Heart right ventricle (tissue), 16 donors: ENCODE measurements at regions of chr10 and their contacts with region 1.

Region 1: DNA sequence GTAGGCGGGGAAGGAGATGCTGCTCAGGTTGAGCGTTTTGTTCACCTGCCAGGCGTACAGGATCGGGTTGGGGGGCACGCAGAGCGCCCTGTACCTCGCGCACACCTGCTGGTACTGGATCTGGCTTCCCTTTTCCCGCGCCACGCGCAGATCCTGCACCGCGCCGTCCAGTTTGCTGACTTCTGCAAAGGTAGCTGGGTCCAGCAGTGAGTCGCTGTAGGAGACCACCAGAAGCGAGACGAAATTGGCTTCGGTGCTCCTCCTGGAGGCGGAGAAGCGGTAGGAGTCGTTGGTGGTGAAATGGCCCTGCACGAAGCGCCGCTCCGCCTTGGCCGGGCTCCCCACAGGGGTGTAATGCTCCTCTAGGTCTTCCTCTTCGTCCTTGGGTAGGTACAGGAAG is 90.7 kb upstream of the RAB18 start:
- DNase-seq: no peak
- ATAC-seq: peak in 1 of 8 donors; percentile 31
- H3K4me3 ChIP-seq: no peak overlapping the region
- H3K27ac ChIP-seq: no peak overlapping the region
- H3K4me1 ChIP-seq: no peaks in the 10 kb centered on the region
- H3K27me3 ChIP-seq: peaks cover 0 to 46% (median 24%) of the 10 kb centered on the region in 7 donors
- CTCF ChIP-seq: no peak

Region 2: DNA sequence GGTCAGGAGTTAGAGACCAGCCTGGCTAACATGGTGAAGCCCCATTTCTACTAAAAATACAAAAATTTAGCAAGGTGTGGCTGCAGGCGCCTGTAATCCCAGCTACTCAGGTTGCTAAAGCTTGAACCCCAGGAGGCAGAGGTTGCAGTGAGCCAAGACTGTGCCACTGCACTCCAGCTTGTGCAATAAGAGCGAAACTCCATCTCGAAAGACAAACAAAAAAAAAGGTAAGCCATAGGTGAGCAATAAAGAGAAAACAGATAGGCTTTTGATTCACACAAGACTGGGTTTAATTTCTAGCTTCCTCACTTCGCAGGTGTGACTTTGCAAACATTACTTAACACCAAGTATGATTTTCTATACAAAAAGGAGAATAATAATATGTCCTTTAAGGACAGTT is 100.5 kb before region 1 on chr10:
- intact Hi-C with region 1: loop called in 1 of 10 experiments (anchors 5 kb)
- DNase-seq: no peak
- ATAC-seq: no peak
- H3K4me3 ChIP-seq: no peak overlapping the region
- H3K27ac ChIP-seq: no peak overlapping the region
- H3K4me1 ChIP-seq: no peaks in the 10 kb centered on the region
- H3K27me3 ChIP-seq: peaks cover 0 to 3% (median 0%) of the 10 kb centered on the region in 7 donors
- CTCF ChIP-seq: no peak

Region 3: GRCh38 chr10:27713927-27714326 is 300.5 kb after region 1 on chr10:
- intact Hi-C with region 1: no loop called
- DNase-seq: no peak
- ATAC-seq: peak in 7 of 8 donors; percentile 38 to 68 (median 62)
- H3K4me3 ChIP-seq: no peak overlapping the region
- H3K27ac ChIP-seq: peak overlapping the region in 3 of 10 donors; percentile 39 to 55 (median 47)
- H3K4me1 ChIP-seq: peaks cover 0 to 27% (median 8%) of the 10 kb centered on the region in 9 donors
- H3K27me3 ChIP-seq: peaks cover 0 to 6% (median 0%) of the 10 kb centered on the region in 7 donors
- CTCF ChIP-seq: no peak